ENCODE measurements at regions of chr14 and their contacts with region 1.

Region 1: GRCh38 chr14:66306101-66306500 is 180.1 kb upstream of the CCDC196 start:
- DNase-seq: no peak

Region 2: GRCh38 chr14:65304963-65305362 is 1001.1 kb before region 1 on chr14:
- intact Hi-C with region 1: loop called in 1 of 2 experiments (anchors 5 kb)
- DNase-seq: no peak